Panc1 (cell line): ENCODE measurements at regions of chr19 and their contacts with region 1.

Region 1: GRCh38 chr19:1540365-1540925 is 16.6 kb downstream of the PLK5 start:
- DNase-seq: no peak
- ATAC-seq: no peak
- H3K4me3 ChIP-seq: no peak overlapping the region
- H3K27ac ChIP-seq: no peak overlapping the region
- H3K4me1 ChIP-seq: no peaks in the 10 kb centered on the region
- H3K27me3 ChIP-seq: no peaks in the 10 kb centered on the region
- CTCF ChIP-seq: no peak

Region 2: GRCh38 chr19:1465191-1466016 is 75.0 kb before region 1 on chr19:
- CTCF ChIA-PET with region 1: no interaction called
- POLR2A ChIA-PET with region 1: no interaction called
- in situ Hi-C with region 1: no loop called
- intact Hi-C with region 1: no loop called
- DNase-seq: no peak
- ATAC-seq: no peak
- H3K4me3 ChIP-seq: no peak overlapping the region
- H3K27ac ChIP-seq: no peak overlapping the region
- H3K4me1 ChIP-seq: no peaks in the 10 kb centered on the region
- H3K27me3 ChIP-seq: no peaks in the 10 kb centered on the region
- CTCF ChIP-seq: no peak; the same call in 1 of the 2 replicates

Region 3: DNA sequence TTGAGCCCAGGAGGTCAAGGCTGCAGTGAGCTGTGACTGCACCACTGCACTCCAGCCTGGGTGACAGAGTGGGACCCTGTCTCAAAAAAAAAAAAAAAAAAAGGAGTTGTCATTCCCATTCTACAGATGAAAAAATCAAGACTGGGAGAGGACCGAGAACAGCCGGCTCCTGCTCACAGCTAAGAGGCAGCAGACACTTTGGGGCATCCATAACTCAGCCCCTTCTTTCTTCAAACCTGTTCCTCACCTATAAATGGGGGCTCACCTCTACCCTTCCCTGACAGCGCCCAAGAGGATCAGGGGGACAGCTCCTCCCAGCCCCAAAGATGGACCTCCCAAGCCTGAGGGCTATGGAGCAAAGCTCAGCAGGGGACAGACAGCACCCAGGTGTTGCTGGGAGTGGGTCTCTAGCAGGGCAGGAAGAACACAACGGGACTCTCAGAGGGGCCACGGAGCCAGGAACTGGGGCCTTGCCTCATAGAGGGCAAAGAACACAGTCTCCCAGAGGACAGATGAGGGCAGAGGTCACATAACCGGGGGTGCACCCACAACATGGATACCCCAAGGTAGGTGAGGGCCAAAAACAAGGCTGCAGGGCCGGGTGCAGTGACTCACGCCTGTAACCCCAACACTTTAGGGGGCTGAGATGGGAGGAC is 326.4 kb after region 1 on chr19:
- CTCF ChIA-PET with region 1: no interaction called
- POLR2A ChIA-PET with region 1: interaction called, 16 read pairs
- in situ Hi-C with region 1: no loop called
- intact Hi-C with region 1: no loop called
- DNase-seq: no peak
- ATAC-seq: no peak
- H3K4me3 ChIP-seq: no peak overlapping the region
- H3K27ac ChIP-seq: no peak overlapping the region
- H3K4me1 ChIP-seq: peaks cover 10% of the 10 kb centered on the region
- H3K27me3 ChIP-seq: no peaks in the 10 kb centered on the region
- CTCF ChIP-seq: no peak